Caco-2 (cell line): ENCODE measurements at regions of chr16 and their contacts with region 1.

Region 1: DNA sequence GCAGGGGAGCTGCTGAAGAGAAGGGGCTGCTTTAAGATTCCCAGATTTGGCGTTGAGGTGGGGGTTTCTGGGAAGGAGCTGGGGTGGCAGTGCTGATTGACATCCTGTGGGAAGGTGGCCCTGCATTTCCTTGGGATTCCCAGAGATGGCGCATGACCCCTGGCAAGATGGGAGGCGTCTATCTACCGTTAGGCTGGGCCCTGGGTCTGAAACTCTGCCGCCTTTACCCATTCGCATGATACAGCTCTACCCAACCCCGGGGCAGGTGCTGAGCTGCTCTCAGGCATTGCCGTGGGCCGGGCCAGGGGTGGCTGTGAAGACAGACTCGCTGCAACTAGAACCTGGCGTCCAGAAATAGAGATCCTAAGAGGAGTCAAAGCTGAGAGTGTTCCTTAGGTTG is 9.9 kb upstream of the MVD start:
- DNase-seq: peak in 1 of 2 experiments; percentile 51
- H3K4me3 ChIP-seq: no peak overlapping the region
- H3K4me3 Mint-ChIP-seq: no peak overlapping the region
- H3K27ac Mint-ChIP-seq: no peak overlapping the region
- H3K4me1 ChIP-seq: no peaks in the 10 kb centered on the region
- H3K4me1 Mint-ChIP-seq: no peaks in the 10 kb centered on the region
- H3K27me3 ChIP-seq: no peaks in the 10 kb centered on the region
- H3K27me3 Mint-ChIP-seq: no peaks in the 10 kb centered on the region
- CTCF ChIP-seq: peak; percentile 15 to 44

Region 2: DNA sequence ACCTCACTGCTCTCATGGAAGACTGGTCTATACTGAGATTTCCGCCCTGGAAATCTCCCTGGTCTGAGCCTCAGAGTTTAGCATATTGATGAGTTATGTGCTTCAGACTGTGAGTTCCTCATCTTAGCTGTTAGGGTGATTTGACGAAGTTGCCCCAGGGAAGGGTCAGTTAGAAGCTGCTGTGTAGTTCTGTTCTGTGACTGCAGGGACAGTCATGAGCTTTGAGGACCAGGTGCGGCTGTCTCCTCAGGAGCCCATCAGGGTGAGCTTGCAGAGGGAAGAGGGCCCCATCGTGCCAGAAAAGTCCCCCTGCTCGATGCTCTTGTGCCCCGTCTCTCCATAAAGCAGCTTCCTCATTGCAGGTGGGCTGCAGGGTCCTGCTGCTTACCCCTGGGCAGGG is 62.7 kb before region 1 on chr16:
- CTCF ChIA-PET with region 1: interaction called, 11 read pairs
- POLR2A ChIA-PET with region 1: no interaction called
- intact Hi-C with region 1: no loop called
- DNase-seq: no peak
- H3K4me3 ChIP-seq: no peak overlapping the region
- H3K4me3 Mint-ChIP-seq: no peak overlapping the region
- H3K27ac Mint-ChIP-seq: no peak overlapping the region
- H3K4me1 ChIP-seq: no peaks in the 10 kb centered on the region
- H3K4me1 Mint-ChIP-seq: peaks cover 6% of the 10 kb centered on the region
- H3K27me3 ChIP-seq: no peaks in the 10 kb centered on the region
- H3K27me3 Mint-ChIP-seq: no peaks in the 10 kb centered on the region
- CTCF ChIP-seq: peak; percentile 32 to 45

Region 3: GRCh38 chr16:88628512-88628974 is 44.2 kb before region 1 on chr16:
- CTCF ChIA-PET with region 1: no interaction called
- POLR2A ChIA-PET with region 1: no interaction called
- intact Hi-C with region 1: no loop called
- DNase-seq: peak; percentile 60 to 77
- H3K4me3 ChIP-seq: no peak overlapping the region
- H3K4me3 Mint-ChIP-seq: no peak overlapping the region
- H3K27ac Mint-ChIP-seq: no peak overlapping the region
- H3K4me1 ChIP-seq: no peaks in the 10 kb centered on the region
- H3K4me1 Mint-ChIP-seq: no peaks in the 10 kb centered on the region
- H3K27me3 ChIP-seq: no peaks in the 10 kb centered on the region
- H3K27me3 Mint-ChIP-seq: no peaks in the 10 kb centered on the region
- CTCF ChIP-seq: peak; percentile 52 to 63

Region 4: DNA sequence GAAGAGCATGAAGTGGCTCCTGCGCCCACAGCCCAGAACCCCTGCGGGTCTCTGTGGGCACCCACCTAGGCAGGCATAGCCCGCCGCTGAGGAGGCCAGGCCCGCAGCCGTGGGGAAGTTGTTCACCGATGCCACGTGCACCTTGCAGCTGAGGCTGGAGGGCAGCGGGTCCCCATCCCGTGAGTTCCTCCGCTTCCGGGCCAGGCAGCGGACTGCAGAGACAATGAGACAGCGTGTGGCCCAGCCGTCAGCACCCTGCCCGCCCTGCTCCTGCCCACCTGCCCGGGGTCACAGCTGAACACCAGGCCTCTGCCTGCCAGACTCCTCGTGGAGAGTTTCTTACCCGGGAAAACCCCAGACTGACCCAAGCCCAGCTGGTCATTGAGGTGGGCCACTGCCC is 15.4 kb before region 1 on chr16:
- CTCF ChIA-PET with region 1: no interaction called
- POLR2A ChIA-PET with region 1: no interaction called
- intact Hi-C with region 1: no loop called
- DNase-seq: no peak
- H3K4me3 ChIP-seq: no peak overlapping the region
- H3K4me3 Mint-ChIP-seq: no peak overlapping the region
- H3K27ac Mint-ChIP-seq: no peak overlapping the region
- H3K4me1 ChIP-seq: peaks cover 11% of the 10 kb centered on the region
- H3K4me1 Mint-ChIP-seq: peaks cover 5% of the 10 kb centered on the region
- H3K27me3 ChIP-seq: no peaks in the 10 kb centered on the region
- H3K27me3 Mint-ChIP-seq: no peaks in the 10 kb centered on the region
- CTCF ChIP-seq: no peak

Region 5: DNA sequence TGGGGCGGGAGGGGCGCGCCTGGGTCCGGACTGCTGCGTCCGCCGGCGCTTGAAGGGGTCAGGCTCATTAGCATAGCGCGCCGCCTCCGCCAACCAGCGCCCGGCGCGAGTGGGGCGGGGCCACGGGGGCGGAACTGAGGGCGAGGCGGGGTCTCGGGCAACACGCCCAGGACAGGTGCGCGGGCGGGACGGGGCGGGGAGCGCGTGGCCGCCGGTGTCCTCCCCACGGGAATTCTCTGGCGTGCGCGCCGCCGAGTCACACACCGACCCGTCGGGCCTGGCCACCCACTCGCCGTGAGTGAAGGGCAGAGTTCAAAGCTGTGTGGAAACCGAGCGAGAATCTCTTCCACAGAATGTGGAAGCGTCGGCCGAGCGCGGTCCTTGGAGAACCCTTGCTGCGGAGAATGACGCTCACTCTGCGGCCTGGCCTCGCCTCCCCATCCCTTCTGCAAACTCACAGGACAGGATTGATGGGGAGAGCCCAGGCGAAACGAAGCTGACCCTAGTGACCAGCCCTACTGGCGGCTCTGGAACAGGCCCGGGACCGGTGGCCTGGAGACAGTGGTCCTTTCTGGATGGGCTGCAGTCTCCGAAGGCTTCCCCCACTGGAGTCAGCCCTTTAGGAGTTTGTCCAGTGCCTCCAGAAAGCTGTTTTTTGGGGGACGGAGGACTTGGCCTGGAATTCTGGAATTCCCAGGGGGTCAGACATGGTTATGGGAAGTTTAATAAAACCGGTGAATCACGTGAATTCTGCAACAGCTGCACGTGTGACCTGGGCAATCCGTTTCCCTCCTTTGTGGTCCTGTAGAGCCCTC is 13.9 kb after region 1 on chr16 and contains the start of gene SNAI3:
- CTCF ChIA-PET with region 1: interaction called, 10 read pairs
- POLR2A ChIA-PET with region 1: no interaction called
- intact Hi-C with region 1: no loop called
- DNase-seq: peak; percentile 92 to 98
- H3K4me3 ChIP-seq: peak within 1 kb of the TSS; percentile 82
- H3K4me3 Mint-ChIP-seq: peak within 1 kb of the TSS; percentile 78
- H3K27ac Mint-ChIP-seq: no peak within 1 kb of the TSS
- H3K4me1 ChIP-seq: peaks cover 24% of the 10 kb centered on the region
- H3K4me1 Mint-ChIP-seq: peaks cover 13% of the 10 kb centered on the region
- H3K27me3 ChIP-seq: no peaks in the 10 kb centered on the region
- H3K27me3 Mint-ChIP-seq: no peaks in the 10 kb centered on the region
- CTCF ChIP-seq: no peak
- total RNA-seq, gene SNAI3: 3.5 TPM in 2 replicates